ENCODE measurements at regions of chr14 and their contacts with region 1.

Region 1: DNA sequence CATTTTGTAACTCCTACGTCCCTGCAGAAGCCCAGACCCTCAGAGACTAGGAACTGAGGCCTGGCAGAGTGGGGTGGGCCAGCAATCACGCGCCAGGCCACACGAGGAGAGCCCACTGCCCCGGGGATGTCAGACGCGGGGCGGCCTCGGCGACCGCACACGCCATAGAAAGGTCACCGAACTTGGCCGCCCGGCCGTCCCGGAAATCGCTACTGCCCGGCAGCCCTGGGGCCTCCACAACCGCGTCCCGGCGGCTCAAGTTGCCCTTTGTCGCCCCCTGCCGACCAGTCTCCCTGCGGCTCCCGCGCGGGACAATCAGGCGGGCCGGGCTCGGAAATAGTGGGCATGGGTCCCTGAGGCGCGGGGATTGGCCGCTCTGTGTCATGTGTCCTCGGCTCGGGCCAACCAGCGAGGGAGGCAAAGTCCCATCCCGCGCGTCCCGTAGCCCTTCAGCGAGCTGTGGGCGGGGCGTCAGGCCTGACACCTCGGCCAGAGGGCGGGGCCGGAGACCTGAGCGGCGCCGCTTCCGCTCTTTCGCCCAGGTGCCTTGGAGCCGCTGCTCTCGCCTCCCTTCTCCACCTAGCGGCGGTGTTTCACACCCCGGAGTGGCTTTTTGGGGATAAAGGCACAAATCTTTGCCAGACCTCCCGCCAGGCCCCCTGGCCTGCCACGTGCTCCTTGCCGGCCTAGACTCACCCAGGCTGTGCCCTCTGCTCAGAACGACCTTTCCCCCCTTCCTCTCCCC is 33.4 kb upstream of the DEGS2 start:
- DNase-seq: peak; percentile 99
- H3K4me3 ChIP-seq: peak overlapping the region; percentile 44 to 54
- H3K27ac ChIP-seq: peak overlapping the region; percentile 44 to 77
- H3K4me1 ChIP-seq: peaks cover 4 to 12% of the 10 kb centered on the region in 2 experiments; a peak in 2 of 4 replicates
- H3K27me3 ChIP-seq: no peaks in the 10 kb centered on the region
- CTCF ChIP-seq: peak; percentile 81
- EP300 ChIP-seq: no peak
- RAD21 ChIP-seq: peak; percentile 85

Region 2: DNA sequence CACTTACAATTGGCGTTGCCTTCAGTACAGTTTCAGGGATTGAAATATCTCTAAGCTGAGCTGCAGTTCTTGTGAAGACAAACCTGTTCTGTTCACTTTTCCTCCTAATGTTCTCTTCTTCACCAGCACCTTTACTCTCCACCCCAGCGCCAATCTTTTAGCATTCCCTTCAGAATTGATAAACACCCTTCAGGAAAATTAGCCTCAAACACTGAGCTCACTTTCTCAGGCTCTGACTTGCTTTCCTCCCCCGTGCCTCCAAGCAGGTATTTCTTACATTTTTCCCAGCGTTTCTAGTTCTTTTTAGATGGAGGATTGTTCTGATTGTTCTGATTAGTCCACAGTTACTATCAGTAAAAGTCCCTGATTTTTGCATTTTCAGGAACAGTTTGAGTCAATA is 216.2 kb before region 1 on chr14:
- CTCF ChIA-PET with region 1: interaction called, 54 read pairs
- POLR2A ChIA-PET with region 1: no interaction called
- DNase-seq: no peak
- H3K4me3 ChIP-seq: no peak overlapping the region
- H3K27ac ChIP-seq: no peak overlapping the region
- H3K4me1 ChIP-seq: peaks cover 0 to 7% of the 10 kb centered on the region in 2 experiments; a peak in 1 of 4 replicates
- H3K27me3 ChIP-seq: no peaks in the 10 kb centered on the region
- CTCF ChIP-seq: no peak
- EP300 ChIP-seq: no peak
- RAD21 ChIP-seq: no peak

Region 3: GRCh38 chr14:100096570-100096971 is 96.3 kb before region 1 on chr14:
- CTCF ChIA-PET with region 1: interaction called, 10 read pairs
- POLR2A ChIA-PET with region 1: interaction called, 3 read pairs
- DNase-seq: no peak
- H3K4me3 ChIP-seq: no peak overlapping the region
- H3K27ac ChIP-seq: peak overlapping the region in 1 of 2 experiments; percentile 5; a peak in 1 of 4 replicates
- H3K4me1 ChIP-seq: peaks cover 0 to 20% of the 10 kb centered on the region in 2 experiments; a peak in 1 of 4 replicates
- H3K27me3 ChIP-seq: no peaks in the 10 kb centered on the region
- CTCF ChIP-seq: no peak
- EP300 ChIP-seq: peak in 1 of 2 experiments; percentile 40; a peak in 1 of 4 replicates
- RAD21 ChIP-seq: no peak

Region 4: GRCh38 chr14:100122481-100123222 is 70.2 kb before region 1 on chr14:
- CTCF ChIA-PET with region 1: interaction called, 20 read pairs
- POLR2A ChIA-PET with region 1: no interaction called
- DNase-seq: no peak
- H3K4me3 ChIP-seq: no peak overlapping the region
- H3K27ac ChIP-seq: no peak overlapping the region
- H3K4me1 ChIP-seq: peaks cover 0 to 4% of the 10 kb centered on the region in 2 experiments; a peak in 1 of 4 replicates
- H3K27me3 ChIP-seq: no peaks in the 10 kb centered on the region
- CTCF ChIP-seq: no peak
- EP300 ChIP-seq: no peak
- RAD21 ChIP-seq: peak; percentile 57

Region 5: GRCh38 chr14:100140452-100141078 is 52.3 kb before region 1 on chr14:
- CTCF ChIA-PET with region 1: interaction called, 23 read pairs
- POLR2A ChIA-PET with region 1: interaction called, 3 read pairs
- DNase-seq: no peak
- H3K4me3 ChIP-seq: no peak overlapping the region
- H3K27ac ChIP-seq: peak overlapping the region in 1 of 2 experiments; percentile 96; a peak in 1 of 4 replicates
- H3K4me1 ChIP-seq: peaks cover 0 to 44% of the 10 kb centered on the region in 2 experiments; a peak in 1 of 4 replicates
- H3K27me3 ChIP-seq: no peaks in the 10 kb centered on the region
- CTCF ChIP-seq: no peak
- EP300 ChIP-seq: no peak
- RAD21 ChIP-seq: no peak

Region 6: DNA sequence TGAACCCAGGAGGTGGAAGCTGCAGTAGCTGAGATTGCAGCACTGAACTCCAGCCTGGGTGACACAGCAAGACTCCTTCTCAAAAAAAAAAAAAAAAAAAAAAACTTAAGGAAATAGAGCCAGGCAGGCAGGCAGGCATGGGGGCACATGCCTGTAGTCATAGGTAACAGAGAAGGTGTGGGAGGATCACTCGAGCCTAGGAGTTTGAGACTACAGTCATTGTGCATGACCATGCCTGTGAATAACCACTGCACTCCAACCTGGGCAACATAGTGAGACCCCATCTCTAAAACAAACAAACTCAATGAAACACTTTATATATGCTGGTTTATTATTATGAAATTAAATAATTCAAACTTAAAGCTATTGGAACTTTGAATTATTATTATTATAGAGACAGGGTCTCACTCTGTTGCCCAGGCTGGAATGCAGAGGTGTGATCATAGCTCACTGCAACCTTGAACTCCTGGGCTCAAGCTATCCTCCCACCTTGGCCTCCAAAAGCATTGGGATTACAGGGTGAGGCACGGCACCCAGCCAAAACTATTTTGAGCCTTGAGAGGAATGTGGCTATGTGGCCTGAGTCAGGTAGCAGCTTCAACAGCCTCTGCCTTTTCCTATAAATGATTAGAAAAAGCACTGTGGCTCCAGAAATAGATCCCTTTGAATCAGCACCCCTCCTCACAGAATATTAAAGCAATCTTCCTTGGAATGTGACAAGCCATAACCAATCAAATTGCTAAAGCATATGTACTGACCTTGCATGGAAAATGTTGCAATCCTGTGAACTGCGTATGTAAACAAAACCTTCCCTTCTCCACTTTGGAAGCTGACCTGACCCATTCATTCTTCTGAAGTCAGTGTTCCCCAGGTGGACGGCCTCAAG is 11.3 kb after region 1 on chr14:
- CTCF ChIA-PET with region 1: interaction called, 21 read pairs
- POLR2A ChIA-PET with region 1: no interaction called
- DNase-seq: no peak
- H3K4me3 ChIP-seq: no peak overlapping the region
- H3K27ac ChIP-seq: no peak overlapping the region
- H3K4me1 ChIP-seq: no peaks in the 10 kb centered on the region
- H3K27me3 ChIP-seq: no peaks in the 10 kb centered on the region
- CTCF ChIP-seq: no peak
- EP300 ChIP-seq: no peak
- RAD21 ChIP-seq: no peak

Region 7: GRCh38 chr14:100374876-100375265 is 182.0 kb after region 1 on chr14:
- CTCF ChIA-PET with region 1: no interaction called
- POLR2A ChIA-PET with region 1: no interaction called
- DNase-seq: no peak
- H3K4me3 ChIP-seq: peak overlapping the region; percentile 70 to 93
- H3K27ac ChIP-seq: peak overlapping the region; percentile 87 to 98
- H3K4me1 ChIP-seq: peaks cover 0 to 20% of the 10 kb centered on the region in 2 experiments; a peak in 1 of 4 replicates
- H3K27me3 ChIP-seq: no peaks in the 10 kb centered on the region
- CTCF ChIP-seq: no peak
- EP300 ChIP-seq: no peak
- RAD21 ChIP-seq: no peak

Measured in SK-N-SH (cell line).